Heart right ventricle (tissue), 16 donors: ENCODE measurements at regions of chr4 and their contacts with region 1.

Region 1: GRCh38 chr4:189285377-189285776 is 655.3 kb upstream of the FRG1 start:
- DNase-seq: no peak
- ATAC-seq: no peak
- H3K4me3 ChIP-seq: no peak overlapping the region
- H3K27ac ChIP-seq: no peak overlapping the region
- H3K4me1 ChIP-seq: no peaks in the 10 kb centered on the region
- H3K27me3 ChIP-seq: peaks cover 0 to 8% (median 0%) of the 10 kb centered on the region in 7 donors
- CTCF ChIP-seq: no peak

Region 2: GRCh38 chr4:189322426-189322825 is 37.0 kb after region 1 on chr4:
- intact Hi-C with region 1: loop called in 1 of 10 experiments (anchors 1 kb)
- DNase-seq: no peak
- ATAC-seq: no peak
- H3K4me3 ChIP-seq: no peak overlapping the region
- H3K27ac ChIP-seq: no peak overlapping the region
- H3K4me1 ChIP-seq: no peaks in the 10 kb centered on the region
- H3K27me3 ChIP-seq: no peaks in the 10 kb centered on the region
- CTCF ChIP-seq: no peak